CD14-positive monocyte (primary cell): ENCODE measurements at regions of chr1 and their contacts with region 1.

Region 1: DNA sequence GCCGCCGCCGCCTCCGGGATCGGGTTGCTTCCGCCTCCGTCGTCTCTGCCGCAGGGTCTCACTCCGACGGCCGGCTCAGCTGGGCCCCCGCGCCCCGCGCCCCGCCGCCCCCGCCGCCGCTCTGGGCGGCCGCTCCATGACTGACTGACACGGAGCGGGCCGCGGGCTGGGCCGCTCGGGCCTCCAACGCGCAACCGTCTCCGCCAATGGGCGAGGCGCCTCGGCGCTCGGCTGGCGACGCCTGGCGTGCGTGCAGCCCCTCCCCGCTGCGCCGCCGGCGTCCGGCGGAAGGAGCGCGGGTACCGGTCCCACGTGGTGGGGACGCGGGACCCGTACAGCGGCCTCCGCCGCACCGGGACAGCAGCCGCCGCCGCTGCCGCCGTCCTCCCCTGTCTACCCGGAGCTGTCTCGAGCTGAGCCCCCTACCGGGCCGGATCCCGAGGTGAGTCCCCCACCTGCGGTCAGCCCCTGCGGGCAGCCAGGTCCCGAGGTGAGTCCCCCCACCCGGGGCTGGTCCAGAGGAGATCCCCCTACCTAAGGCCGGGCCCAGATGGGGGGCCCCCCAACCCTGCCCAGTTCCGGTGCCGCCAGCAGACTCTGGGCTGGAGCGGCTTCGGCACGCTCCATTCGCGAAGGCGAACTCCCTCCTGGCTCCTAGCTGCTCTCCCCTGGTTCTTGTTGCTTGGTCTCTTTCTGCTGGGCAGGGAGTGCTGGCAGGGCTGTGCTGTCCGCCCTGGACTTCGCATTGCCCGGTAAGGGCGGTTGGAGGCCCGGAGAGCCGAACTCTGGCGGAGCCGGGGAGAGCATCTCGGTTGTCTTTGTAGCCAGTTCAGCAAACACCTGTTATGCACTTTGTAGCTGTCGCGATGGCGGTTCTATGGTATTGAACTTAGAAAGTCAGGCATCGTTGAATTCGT is at the starts of genes TAF5L and URB2:
- DNase-seq: peak; percentile 76 to 86 (median 83)
- H3K4me3 ChIP-seq: peak within 1 kb of the TSS; percentile 83 to 97 (median 89)
- H3K4me3 Mint-ChIP-seq: peak within 1 kb of the TSS; percentile 94 to 99
- H3K27ac ChIP-seq: peak within 1 kb of the TSS; percentile 40 to 84
- H3K27ac Mint-ChIP-seq: peak within 1 kb of the TSS; percentile 73 to 93 (median 91)
- H3K4me1 ChIP-seq: peaks cover 20 to 30% of the 10 kb centered on the region in 2 donors
- H3K4me1 Mint-ChIP-seq: peaks cover 39% of the 10 kb centered on the region
- H3K27me3 ChIP-seq: no peaks in the 10 kb centered on the region
- H3K27me3 Mint-ChIP-seq: no peaks in the 10 kb centered on the region
- CTCF ChIP-seq: no peak
- polyA plus RNA-seq, gene TAF5L: 3.8 to 15.4 (median 4.9) TPM
- polyA plus RNA-seq, gene URB2: 0.79 to 2.8 (median 1.5) TPM

Region 2: DNA sequence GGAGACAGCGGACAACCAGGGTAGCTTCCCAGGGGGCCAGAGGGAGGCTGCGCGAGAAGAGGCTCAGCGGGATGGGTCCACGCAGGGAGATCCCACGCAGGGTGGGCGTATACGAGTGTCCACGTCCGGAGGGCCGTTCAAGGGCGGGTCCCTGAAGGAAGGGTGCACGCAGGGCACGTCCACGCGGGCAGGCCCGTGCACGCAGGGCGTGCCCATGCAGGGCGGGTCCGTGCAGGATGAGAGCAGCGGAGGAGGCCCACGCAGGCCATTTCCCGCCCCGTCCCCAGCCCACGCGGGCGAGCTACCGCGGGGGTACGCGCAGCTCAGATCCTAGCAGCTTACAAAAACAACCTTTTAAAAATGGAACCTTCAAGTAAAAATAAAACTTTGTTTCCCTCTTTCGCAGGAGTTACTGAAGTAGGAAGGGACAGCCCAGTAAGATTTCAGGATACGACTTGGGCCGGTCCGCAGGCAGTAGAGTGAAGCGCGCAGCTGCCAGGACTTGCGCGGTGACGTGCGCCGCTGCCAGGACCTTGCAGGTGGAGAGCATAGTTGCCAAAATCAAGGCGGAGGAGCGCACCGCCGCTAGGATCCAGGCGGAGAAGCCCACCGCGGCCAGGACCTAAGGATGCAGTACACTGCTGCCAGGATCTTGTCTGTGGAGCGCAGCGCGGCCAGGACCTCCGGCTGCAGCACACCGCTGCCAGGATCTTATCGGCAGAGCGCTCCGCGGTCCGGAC is 1139.4 kb before region 1 on chr1:
- intact Hi-C with region 1: loop called in 1 of 2 experiments (anchors 10 kb)
- DNase-seq: peak; percentile 59 to 85 (median 70)
- H3K4me3 ChIP-seq: peak overlapping the region; percentile 67 to 84 (median 82)
- H3K4me3 Mint-ChIP-seq: peak overlapping the region; percentile 87 to 94
- H3K27ac ChIP-seq: peak overlapping the region; percentile 97 to 99
- H3K27ac Mint-ChIP-seq: peak overlapping the region; percentile 99 to 100 (median 100)
- H3K4me1 ChIP-seq: peaks cover 30 to 44% of the 10 kb centered on the region in 2 donors
- H3K4me1 Mint-ChIP-seq: peaks cover 37% of the 10 kb centered on the region
- H3K27me3 ChIP-seq: no peaks in the 10 kb centered on the region
- H3K27me3 Mint-ChIP-seq: peaks cover 2 to 12% (median 8%) of the 10 kb centered on the region in 3 donors
- CTCF ChIP-seq: no peak

Region 3: GRCh38 chr1:229558571-229559335 is 67.4 kb before region 1 on chr1 and contains the start of gene ABCB10:
- intact Hi-C with region 1: loop called (anchors 5 kb)
- DNase-seq: peak; percentile 94 to 97 (median 94)
- H3K4me3 ChIP-seq: peak within 1 kb of the TSS; percentile 65 to 95 (median 89)
- H3K4me3 Mint-ChIP-seq: peak within 1 kb of the TSS; percentile 89 to 94
- H3K27ac ChIP-seq: peak within 1 kb of the TSS; percentile 54 to 80
- H3K27ac Mint-ChIP-seq: peak within 1 kb of the TSS; percentile 74 to 89 (median 79)
- H3K4me1 ChIP-seq: peaks cover 26 to 32% of the 10 kb centered on the region in 2 donors
- H3K4me1 Mint-ChIP-seq: peaks cover 41% of the 10 kb centered on the region
- H3K27me3 ChIP-seq: no peaks in the 10 kb centered on the region
- H3K27me3 Mint-ChIP-seq: peaks cover 0 to 2% (median 0%) of the 10 kb centered on the region in 3 donors
- CTCF ChIP-seq: peak; percentile 69
- polyA plus RNA-seq, gene ABCB10: 5.4 to 12.9 (median 11.4) TPM